HAP-1 (cell line): ENCODE measurements at regions of chr4 and their contacts with region 1.

Region 1: DNA sequence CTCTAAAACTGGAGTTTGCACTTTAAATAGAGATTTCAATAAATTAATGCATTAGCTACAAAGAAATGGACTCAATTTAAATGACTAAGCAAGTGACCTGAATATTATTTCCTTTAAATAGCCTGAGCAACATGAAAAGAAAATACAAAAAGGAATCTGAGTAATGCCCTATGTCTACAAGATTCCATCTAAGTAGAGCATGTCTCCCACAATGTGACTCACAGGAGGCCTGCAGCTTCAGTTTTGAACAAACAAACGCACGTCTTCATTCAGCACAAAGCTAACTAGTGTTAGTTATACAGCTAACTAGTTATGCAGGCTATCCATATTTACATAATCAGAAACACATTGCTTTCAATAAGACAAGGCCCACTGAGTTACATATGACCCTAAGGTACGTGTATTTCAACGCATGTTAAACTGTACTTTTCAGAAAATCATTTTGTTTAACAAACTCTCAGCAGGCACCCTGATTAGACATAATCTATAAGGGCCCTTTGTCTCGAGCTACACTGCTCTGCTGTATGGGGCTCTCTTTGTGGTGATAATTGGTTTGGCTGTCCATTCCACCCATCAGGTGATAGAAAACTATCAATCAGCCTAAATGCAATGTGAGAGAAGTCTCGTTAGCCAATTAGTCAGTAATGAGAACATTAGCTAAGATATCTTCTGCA is 116.5 kb downstream of the MAML3 start:
- DNase-seq: peak; percentile 37 to 53
- H3K4me3 ChIP-seq: no peak overlapping the region
- H3K4me1 ChIP-seq: peaks cover 22% of the 10 kb centered on the region
- H3K27me3 ChIP-seq: no peaks in the 10 kb centered on the region

Region 2: GRCh38 chr4:139279760-139280620 is 757.5 kb before region 1 on chr4 and contains the start of gene MGARP:
- in situ Hi-C with region 1: no loop called
- DNase-seq: no peak
- H3K4me3 ChIP-seq: no peak within 1 kb of the TSS
- H3K4me1 ChIP-seq: no peaks in the 10 kb centered on the region
- H3K27me3 ChIP-seq: no peaks in the 10 kb centered on the region

Region 3: DNA sequence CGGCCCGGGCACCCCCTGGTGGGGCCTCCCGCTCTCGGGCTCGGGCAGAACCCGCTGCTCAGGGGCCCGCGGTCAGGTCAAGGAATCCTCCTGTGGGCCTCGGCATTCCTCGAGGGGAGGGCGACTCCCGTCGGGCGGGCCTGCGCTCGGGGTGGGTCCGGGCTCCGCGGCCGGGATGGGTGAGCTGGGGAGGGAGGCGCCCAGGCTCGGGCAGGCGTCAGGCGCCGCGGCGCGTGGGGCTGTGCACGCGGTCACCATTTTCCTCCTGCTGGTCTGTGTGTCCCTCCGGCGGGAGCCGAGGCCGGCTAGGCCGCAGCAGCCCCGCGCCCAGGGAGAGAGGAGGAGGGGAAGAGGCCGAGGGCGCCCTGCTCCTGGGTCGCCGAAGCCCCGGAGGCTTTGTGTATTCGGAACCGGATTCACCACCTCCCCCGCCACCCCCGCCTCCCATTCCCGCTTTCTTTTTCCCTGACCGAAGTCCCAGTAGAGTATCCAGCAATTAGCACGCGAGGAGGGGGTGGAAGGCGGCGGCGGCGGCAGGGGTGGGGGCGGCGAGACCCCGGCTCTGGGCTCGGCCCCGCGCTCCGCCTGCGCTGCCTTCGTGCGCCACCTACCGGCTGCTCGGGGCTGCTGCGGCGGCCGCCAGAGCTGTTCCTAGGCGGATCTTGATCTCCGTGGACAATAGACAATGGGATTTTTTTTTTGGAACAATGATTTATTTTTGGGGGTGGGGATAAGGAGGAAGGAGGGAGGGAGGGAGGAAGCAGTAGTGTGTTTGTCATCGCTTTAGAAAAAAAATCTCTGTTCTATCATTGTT is 215.5 kb after region 1 on chr4:
- in situ Hi-C with region 1: loop called (anchors 10 kb)
- DNase-seq: peak; percentile 87
- H3K4me3 ChIP-seq: peak overlapping the region; percentile 30
- H3K4me1 ChIP-seq: peaks cover 13% of the 10 kb centered on the region
- H3K27me3 ChIP-seq: no peaks in the 10 kb centered on the region

Region 4: DNA sequence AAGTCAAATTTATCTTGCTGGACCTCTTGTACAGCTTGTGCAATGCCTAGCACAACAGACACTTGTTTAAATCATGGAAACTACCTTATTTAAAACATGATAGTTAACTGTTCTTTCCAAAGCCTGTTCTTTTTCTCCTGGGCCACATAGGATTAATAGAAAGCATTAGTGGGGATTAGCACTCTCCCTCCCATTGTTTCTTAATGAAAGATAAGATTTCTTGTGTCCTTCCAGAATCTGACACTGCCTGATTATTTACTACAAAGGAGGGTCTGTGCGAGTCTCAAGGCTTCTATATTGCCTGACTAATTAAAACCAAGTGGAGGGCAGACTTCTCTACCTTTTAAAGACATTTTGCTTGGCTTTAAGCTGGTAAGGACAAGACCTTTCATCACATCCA is 477.9 kb after region 1 on chr4:
- in situ Hi-C with region 1: no loop called
- DNase-seq: peak in 1 of 2 experiments; percentile 10
- H3K4me3 ChIP-seq: no peak overlapping the region
- H3K4me1 ChIP-seq: peaks cover 2% of the 10 kb centered on the region; the same call in 1 of the 2 replicates
- H3K27me3 ChIP-seq: peaks cover 2% of the 10 kb centered on the region; the same call in 1 of the 2 replicates